Activated CD4-positive, alpha-beta memory T cell treated with anti-CD3 and anti-CD28 coated beads for 36 hours (primary cell): ENCODE measurements at regions of chr16 and their contacts with region 1.

Region 1: DNA sequence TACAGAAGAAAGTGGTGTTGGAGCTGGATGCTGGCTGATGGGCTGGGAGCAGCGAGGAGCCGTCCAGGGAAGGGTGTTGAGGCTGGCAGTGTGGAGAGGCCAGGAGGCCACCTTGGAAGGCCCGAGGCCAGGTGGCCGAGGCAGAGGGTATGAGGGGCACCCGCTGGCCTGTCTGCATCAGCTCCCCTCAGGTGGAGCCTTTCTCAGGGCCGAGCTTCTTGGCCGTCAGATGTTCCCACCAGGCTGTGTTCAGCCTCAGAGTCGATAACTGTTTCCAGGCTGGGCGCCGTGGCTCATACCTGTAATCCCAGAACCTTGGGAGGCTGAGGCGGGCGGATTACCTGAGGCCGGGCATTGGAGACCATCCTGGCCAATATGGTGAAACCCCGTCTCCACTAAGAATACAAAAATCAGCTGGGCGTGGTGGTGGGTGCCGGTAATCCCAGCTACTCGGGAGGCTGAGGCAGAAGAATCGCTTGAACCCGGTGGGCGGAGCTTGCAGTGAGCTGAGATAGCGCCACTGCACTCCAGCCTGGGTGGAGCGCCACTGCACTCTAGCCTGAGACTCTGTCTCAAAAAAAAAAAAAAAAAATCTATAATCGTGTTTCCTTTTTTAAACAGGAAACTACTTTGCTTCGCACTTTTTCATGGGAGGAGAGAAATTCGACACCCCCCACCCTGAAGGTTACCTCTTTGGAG is 25.3 kb downstream of the MGRN1 start:
- DNase-seq: no peak
- H3K4me3 Mint-ChIP-seq: no peak overlapping the region
- H3K27ac Mint-ChIP-seq: no peak overlapping the region
- H3K4me1 Mint-ChIP-seq: peaks cover 30% of the 10 kb centered on the region
- H3K27me3 Mint-ChIP-seq: no peaks in the 10 kb centered on the region

Region 2: GRCh38 chr16:4574919-4575705 is 74.8 kb before region 1 on chr16:
- CTCF ChIA-PET with region 1: no interaction called
- POLR2A ChIA-PET with region 1: no interaction called
- intact Hi-C with region 1: no loop called
- DNase-seq: no peak
- H3K4me3 Mint-ChIP-seq: no peak overlapping the region
- H3K27ac Mint-ChIP-seq: no peak overlapping the region
- H3K4me1 Mint-ChIP-seq: no peaks in the 10 kb centered on the region
- H3K27me3 Mint-ChIP-seq: no peaks in the 10 kb centered on the region

Region 3: DNA sequence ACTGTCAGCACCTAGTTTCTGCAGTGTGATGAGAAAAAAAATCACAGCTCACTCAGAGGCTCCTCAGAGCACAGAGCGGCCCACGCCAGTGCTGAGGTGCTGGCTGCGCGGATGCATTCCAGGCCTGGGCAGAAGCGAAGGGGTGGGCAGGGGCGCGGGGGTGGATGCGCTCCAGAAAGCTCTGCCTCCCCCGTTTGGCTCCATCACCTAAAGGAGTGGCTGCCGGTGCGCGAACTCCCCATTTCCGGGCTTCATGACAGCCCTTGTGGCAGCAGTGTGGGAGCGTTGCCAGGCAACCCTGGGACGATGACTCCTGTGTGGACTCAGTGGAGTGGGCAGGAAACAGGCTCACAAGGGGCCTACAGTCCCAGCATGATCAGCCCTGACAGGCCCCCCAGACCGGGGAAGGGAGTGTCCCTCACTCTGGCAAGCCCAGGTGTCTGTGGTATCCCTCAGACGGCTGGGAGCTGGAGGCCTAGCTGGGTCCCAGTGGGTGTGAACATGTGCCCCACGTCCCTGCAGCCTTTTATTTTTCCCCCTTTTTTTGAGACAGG is 10.6 kb after region 1 on chr16:
- CTCF ChIA-PET with region 1: interaction called, 10 read pairs
- POLR2A ChIA-PET with region 1: interaction called, 3 read pairs
- intact Hi-C with region 1: no loop called
- DNase-seq: peak; percentile 88
- H3K4me3 Mint-ChIP-seq: no peak overlapping the region
- H3K27ac Mint-ChIP-seq: peak overlapping the region; percentile 69
- H3K4me1 Mint-ChIP-seq: peaks cover 43% of the 10 kb centered on the region
- H3K27me3 Mint-ChIP-seq: no peaks in the 10 kb centered on the region